ENCODE measurements at regions of chr4 and their contacts with region 1.

Region 1: DNA sequence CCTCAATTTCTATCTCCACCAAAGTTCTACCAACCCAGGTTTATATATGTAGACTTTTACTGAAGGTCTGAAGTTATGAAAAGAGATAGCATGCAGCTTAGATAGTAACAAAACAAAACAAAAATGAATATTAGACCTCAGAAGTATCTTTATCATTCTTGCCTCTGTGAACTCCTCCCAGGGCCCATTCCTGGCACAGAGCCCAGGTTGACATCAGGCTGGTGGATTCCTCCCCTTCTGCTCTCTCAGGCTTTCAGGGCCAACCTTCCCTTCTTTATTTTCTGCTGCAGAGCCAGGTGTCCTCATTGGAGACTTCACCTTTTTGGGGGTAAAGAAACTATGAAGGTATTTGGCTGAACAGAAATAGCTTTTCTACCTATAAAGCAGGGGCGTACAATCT is 112.8 kb upstream of the PITX2 start:
- DNase-seq: no peak
- H3K4me3 ChIP-seq: no peak overlapping the region
- CTCF ChIP-seq: no peak
- POLR2A ChIP-seq: no peak

Region 2: GRCh38 chr4:111143510-111143909 is 407.8 kb after region 1 on chr4:
- intact Hi-C with region 1: loop called (anchors 10 kb)
- DNase-seq: no peak
- H3K4me3 ChIP-seq: no peak overlapping the region
- CTCF ChIP-seq: no peak
- POLR2A ChIP-seq: no peak

Measured in lower leg skin (tissue), 4 donors.